MCF 10A (cell line): ENCODE measurements at regions of chr7 and their contacts with region 1.

Region 1: DNA sequence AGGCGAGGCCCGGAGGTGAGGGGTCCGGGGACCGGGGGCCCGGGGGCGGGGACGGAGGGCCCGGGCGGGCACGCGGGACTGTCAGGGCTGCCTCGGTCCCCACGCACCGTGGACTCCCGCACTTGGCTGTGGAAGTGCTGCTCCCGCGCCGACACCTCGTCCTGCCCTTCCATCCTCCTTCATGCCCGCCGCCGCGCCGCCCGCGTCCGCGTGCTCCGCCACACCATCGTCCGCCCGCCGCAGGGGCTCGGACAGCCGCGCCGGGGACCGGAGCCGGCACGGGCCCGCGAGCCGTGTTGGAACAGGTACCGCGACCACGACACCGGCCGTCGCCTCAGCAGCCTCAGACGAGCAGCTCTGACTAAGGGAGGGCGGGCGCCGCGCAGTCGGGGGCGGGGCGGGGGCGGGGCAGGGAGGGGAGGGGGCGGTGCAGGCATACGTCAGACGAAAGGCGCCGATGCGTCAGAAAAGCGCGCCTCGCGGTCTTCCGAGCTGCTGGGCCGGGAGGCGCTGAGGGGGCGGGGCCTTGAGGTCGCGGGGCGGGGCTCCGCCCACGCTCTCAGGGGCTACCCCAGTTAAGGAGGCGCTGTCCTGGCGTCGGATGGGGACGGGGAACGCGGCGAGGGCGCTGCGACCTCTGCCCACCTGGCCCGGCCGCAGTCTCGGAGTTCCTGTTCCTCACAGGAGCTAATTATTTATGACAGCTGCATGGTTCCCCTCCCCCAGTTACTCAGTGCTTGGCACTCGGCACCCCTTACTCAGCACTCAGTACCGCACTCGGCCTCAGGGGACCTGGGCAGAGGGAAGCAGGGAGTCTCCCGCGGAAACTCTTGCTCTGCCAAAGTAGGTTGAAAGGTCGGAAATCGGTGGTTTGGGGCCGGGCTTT is at the start of gene LMBR1:
- DNase-seq: peak; percentile 93
- H3K4me3 Mint-ChIP-seq: peak within 1 kb of the TSS; percentile 80
- H3K27ac Mint-ChIP-seq: peak within 1 kb of the TSS; percentile 92
- H3K4me1 Mint-ChIP-seq: peaks cover 34% of the 10 kb centered on the region
- H3K27me3 Mint-ChIP-seq: no peaks in the 10 kb centered on the region
- CTCF ChIP-seq: peak; percentile 40
- total RNA-seq, gene LMBR1: 95.6 and 105 TPM in 2 replicates

Region 2: GRCh38 chr7:156487811-156488533 is 405.1 kb before region 1 on chr7:
- CTCF ChIA-PET with region 1: no interaction called
- POLR2A ChIA-PET with region 1: no interaction called
- intact Hi-C with region 1: no loop called
- DNase-seq: no peak
- H3K4me3 Mint-ChIP-seq: no peak overlapping the region
- H3K27ac Mint-ChIP-seq: no peak overlapping the region
- H3K4me1 Mint-ChIP-seq: peaks cover 6% of the 10 kb centered on the region
- H3K27me3 Mint-ChIP-seq: no peaks in the 10 kb centered on the region
- CTCF ChIP-seq: no peak

Region 3: DNA sequence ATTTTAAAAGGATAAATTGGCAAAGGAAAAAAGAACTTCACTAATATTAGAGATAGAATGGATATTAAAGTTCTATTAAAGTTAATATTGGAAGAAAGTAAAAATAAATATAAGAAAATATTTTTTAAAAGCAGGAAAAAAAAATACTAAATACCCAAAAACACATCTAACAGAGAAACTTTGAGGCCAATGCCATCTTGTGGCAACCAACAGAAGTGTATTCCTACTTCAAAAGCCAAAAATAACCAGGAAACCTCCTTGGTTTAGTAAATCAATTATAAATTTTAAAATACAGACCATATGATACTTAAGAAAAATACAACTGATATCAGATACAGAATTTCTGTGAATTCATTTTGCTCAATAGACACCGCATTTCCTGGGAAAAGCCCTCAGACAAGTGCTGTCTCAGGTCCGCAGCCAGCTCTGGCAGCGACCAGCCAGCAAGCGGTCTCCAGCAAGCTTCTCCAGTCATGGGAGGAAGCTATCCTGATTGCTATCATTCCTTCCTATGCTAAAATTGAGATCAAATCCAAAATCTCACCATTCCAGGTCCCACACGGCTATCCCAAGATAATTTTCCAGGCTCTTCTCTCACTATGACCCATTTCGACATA is 65.4 kb before region 1 on chr7:
- CTCF ChIA-PET with region 1: no interaction called
- POLR2A ChIA-PET with region 1: interaction called, 5 read pairs
- intact Hi-C with region 1: loop called (anchors 5 kb)
- DNase-seq: peak; percentile 24
- H3K4me3 Mint-ChIP-seq: no peak overlapping the region
- H3K27ac Mint-ChIP-seq: no peak overlapping the region
- H3K4me1 Mint-ChIP-seq: peaks cover 18% of the 10 kb centered on the region
- H3K27me3 Mint-ChIP-seq: no peaks in the 10 kb centered on the region
- CTCF ChIP-seq: peak; percentile 44

Region 4: DNA sequence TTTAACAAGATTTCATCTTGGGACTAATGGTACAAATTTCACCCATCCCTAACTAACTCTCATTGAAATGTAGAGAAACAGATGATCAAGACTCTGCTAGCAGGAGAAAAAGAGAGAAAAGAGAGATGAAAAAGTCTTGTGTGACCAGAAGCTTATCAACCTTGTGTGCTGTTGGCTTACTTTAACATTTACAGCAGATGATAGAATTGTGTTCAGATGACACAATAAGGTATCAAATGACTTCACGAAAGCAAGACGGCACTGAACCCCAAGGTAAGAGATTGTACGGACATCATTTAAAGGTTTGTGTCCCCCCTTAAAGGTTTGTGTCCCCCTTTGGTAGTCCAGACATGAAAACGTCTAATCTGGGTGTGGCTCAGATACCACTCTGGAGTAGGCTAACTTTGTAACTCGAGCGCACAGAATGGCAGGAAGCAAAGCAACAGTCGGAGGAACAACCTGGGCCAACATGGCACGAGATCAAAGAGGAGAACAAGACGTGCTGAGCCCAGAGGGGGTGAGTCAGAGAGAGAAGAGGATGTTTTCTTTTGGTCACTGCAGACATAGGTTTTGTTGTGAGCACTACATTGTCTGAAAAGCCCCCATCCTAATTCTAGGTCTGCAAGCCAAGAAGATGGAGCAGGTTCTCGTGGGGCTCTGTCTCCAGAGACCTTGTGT is 10.3 kb after region 1 on chr7:
- CTCF ChIA-PET with region 1: interaction called, 22 read pairs
- POLR2A ChIA-PET with region 1: interaction called, 41 read pairs
- intact Hi-C with region 1: no loop called
- DNase-seq: peak; percentile 98
- H3K4me3 Mint-ChIP-seq: peak overlapping the region; percentile 60
- H3K27ac Mint-ChIP-seq: peak overlapping the region; percentile 91
- H3K4me1 Mint-ChIP-seq: peaks cover 35% of the 10 kb centered on the region
- H3K27me3 Mint-ChIP-seq: no peaks in the 10 kb centered on the region
- CTCF ChIP-seq: no peak